ENCODE measurements at regions of chr14 and their contacts with region 1.

Region 1: GRCh38 chr14:23539248-23540140 is 12.1 kb downstream of the ZFHX2 start:
- H3K4me3 ChIP-seq: no peak overlapping the region
- H3K27ac ChIP-seq: no peak overlapping the region
- H3K4me1 ChIP-seq: peaks cover 7% of the 10 kb centered on the region
- CTCF ChIP-seq: peak; percentile 64; the same call in 1 of the 2 replicates

Region 2: GRCh38 chr14:23478111-23478759 is 61.3 kb before region 1 on chr14:
- CTCF ChIA-PET with region 1: interaction called, 18 read pairs
- POLR2A ChIA-PET with region 1: interaction called, 3 read pairs
- H3K4me3 ChIP-seq: no peak overlapping the region
- H3K27ac ChIP-seq: no peak overlapping the region
- H3K4me1 ChIP-seq: no peaks in the 10 kb centered on the region
- CTCF ChIP-seq: 0 out of 2 replicates have a peak, but pooled peaks have one; percentile 36

Region 3: GRCh38 chr14:23483236-23483854 is 56.1 kb before region 1 on chr14:
- CTCF ChIA-PET with region 1: interaction called, 18 read pairs
- POLR2A ChIA-PET with region 1: interaction called, 3 read pairs
- H3K4me3 ChIP-seq: no peak overlapping the region
- H3K27ac ChIP-seq: no peak overlapping the region
- H3K4me1 ChIP-seq: no peaks in the 10 kb centered on the region
- CTCF ChIP-seq: peak; percentile 82

Region 4: DNA sequence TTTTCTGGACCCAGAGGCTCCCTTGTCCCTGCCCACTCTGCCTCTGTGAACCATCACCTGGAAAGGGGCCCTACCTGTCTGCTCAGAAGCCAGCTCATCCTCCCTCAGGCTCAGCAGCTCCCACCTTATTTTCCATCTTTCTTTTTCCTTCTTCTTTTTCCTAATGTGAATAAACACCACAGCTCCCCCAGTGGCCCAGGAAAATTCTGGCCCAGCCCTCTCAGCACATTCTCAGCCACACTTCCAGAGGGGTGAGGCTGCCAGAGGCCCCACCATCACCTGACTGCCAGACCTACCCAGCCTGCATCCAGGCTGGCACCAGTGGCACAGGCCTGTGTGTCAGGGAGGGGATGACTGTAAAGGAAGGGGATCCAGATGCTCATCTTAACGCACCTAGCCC is 10.9 kb before region 1 on chr14:
- CTCF ChIA-PET with region 1: interaction called, 21 read pairs
- POLR2A ChIA-PET with region 1: no interaction called
- H3K4me3 ChIP-seq: no peak overlapping the region
- H3K27ac ChIP-seq: no peak overlapping the region
- H3K4me1 ChIP-seq: no peaks in the 10 kb centered on the region
- CTCF ChIP-seq: 0 out of 2 replicates have a peak, but pooled peaks have one; percentile 33

Region 5: DNA sequence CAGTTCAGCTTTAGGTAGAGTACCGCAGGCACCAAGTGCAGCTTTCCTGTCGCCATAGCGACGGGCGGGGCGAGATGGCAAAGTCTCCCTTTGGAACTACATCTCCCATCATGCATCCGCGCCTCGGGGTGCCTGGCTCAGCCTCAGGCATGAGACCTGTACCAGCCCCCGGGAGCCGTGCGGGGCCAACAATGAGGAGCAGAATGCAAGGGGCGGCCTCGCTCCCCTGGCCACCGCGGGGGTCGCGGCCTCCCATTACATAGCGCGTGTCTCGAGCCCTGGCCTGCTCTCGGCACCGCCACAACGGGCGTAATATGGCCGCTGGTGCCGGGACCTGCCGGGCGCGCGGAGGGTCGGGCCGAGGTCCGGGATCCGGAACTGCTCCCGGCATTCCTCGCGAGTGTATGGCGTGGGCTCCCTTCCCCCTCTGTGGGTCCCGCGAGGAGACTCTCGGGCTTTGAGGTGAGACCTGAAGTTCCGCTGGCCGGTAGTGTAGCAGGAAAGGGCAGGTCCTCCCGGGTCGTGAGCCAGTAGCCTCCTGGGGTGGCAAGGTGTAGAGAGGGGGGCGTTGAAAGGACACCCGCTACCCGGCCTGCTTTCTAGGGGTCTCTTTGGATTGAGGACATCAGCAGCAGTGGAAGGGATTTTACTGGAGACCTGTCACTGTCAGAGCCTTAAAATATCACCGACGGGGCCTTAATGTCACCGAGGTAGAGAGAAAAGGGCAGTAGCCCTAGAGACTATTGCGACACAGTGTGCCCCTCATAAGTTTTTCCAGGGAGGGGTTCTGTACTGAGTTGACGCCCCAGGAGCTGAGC is 16.6 kb after region 1 on chr14 and contains the start of gene THTPA:
- CTCF ChIA-PET with region 1: interaction called, 11 read pairs
- POLR2A ChIA-PET with region 1: interaction called, 4 read pairs
- H3K4me3 ChIP-seq: peak within 1 kb of the TSS; percentile 85
- H3K27ac ChIP-seq: peak within 1 kb of the TSS; percentile 81
- H3K4me1 ChIP-seq: peaks cover 10% of the 10 kb centered on the region
- CTCF ChIP-seq: no peak